GM12878 (cell line): ENCODE measurements at regions of chr13 and their contacts with region 1.

Region 1: DNA sequence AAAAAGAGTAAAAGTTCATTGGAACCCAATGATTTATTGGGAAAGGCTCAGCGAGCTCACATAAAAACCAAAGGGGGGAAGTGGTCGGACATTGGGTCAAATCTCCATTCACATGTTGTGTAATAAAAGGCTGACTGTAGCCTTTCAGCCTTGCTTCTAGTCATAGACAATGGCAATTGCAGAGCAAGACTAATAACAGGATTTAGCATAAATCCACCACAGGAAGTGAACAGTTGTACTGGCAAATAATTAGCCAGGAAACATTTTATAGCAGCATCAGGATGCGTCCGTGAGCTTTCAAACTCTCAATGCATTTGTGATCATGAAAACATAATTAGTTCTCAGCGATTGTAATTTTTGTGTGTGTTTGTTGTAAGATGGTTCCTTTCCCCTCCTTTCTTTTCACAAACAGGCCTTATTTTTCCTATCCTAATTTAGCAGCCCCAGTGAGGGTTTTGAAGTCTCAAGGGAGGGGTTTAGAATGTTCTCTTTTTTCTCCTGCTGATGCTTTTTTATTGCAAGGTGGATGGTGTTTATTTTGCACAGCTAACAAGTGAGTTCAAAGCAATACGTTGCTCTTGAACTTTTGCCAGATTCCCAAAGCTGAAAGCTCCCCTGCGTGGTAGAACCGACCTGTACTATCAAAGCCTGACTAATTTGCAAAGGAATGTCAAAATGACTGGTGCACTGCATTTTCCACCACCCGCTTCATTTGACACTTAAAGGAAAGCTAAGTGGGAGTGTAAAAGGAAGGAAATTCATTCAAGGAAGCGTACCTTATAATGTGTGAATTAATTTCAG is 105.6 kb downstream of the SPRY2 start:
- DNase-seq: no peak
- ATAC-seq: peak; percentile 89
- H3K4me3 ChIP-seq: no peak overlapping the region
- H3K27ac ChIP-seq: no peak overlapping the region
- H3K4me1 ChIP-seq: no peaks in the 10 kb centered on the region
- H3K27me3 ChIP-seq: no peaks in the 10 kb centered on the region
- CTCF ChIP-seq: no peak
- EP300 ChIP-seq: peak in 1 of 2 experiments; percentile 64; a peak in 1 of 4 replicates
- POLR2A ChIP-seq: no peak
- RAD21 ChIP-seq: no peak

Region 2: DNA sequence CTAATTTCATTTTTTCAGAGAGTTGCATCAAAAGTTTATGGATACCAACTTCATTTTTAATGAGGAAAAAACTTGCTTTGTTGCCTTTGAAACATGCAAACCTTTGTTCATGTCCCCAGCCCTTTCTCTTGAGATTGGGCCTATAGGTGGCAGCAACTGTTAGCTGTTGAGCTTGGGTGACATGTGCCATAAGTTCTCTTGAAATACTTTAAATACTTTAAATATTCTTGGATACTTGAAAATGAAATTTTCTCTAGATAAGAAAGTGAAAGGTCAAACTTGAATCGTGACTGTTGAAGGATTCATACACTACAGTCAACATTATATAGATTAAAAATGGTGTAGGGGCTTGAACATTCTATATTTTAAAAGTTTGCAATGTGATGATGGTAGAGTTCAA is 459.5 kb before region 1 on chr13:
- CTCF ChIA-PET with region 1: interaction called, 3 read pairs
- POLR2A ChIA-PET with region 1: no interaction called
- RAD21 ChIA-PET with region 1: no interaction called
- SMC1A ChIA-PET with region 1: interaction called, 4 read pairs
- in situ Hi-C with region 1: no loop called
- intact Hi-C with region 1: loop called (anchors 5 kb)
- DNase-seq: no peak
- ATAC-seq: peak; percentile 86
- H3K4me3 ChIP-seq: no peak overlapping the region
- H3K27ac ChIP-seq: no peak overlapping the region
- H3K4me1 ChIP-seq: no peaks in the 10 kb centered on the region
- H3K27me3 ChIP-seq: no peaks in the 10 kb centered on the region
- CTCF ChIP-seq: peak; percentile 60 to 78 (median 65)
- EP300 ChIP-seq: no peak
- POLR2A ChIP-seq: no peak
- RAD21 ChIP-seq: peak; percentile 94

Region 3: GRCh38 chr13:80048802-80049201 is 186.6 kb before region 1 on chr13:
- CTCF ChIA-PET with region 1: interaction called, 3 read pairs
- POLR2A ChIA-PET with region 1: interaction called, 3 read pairs
- RAD21 ChIA-PET with region 1: interaction called, 12 read pairs
- SMC1A ChIA-PET with region 1: interaction called, 22 read pairs
- in situ Hi-C with region 1: no loop called
- intact Hi-C with region 1: no loop called
- DNase-seq: peak; percentile 89
- ATAC-seq: peak; percentile 98
- H3K4me3 ChIP-seq: no peak overlapping the region
- H3K27ac ChIP-seq: peak overlapping the region; percentile 18; the same call in 1 of the 2 replicates
- H3K4me1 ChIP-seq: peaks cover 21% of the 10 kb centered on the region
- H3K27me3 ChIP-seq: no peaks in the 10 kb centered on the region
- CTCF ChIP-seq: no peak
- EP300 ChIP-seq: peak; percentile 94 to 98
- POLR2A ChIP-seq: no peak
- RAD21 ChIP-seq: no peak

Region 4: GRCh38 chr13:80251403-80251802 is 16.0 kb after region 1 on chr13:
- CTCF ChIA-PET with region 1: interaction called, 7 read pairs
- POLR2A ChIA-PET with region 1: interaction called, 7 read pairs
- RAD21 ChIA-PET with region 1: interaction called, 13 read pairs
- SMC1A ChIA-PET with region 1: interaction called, 66 read pairs
- in situ Hi-C with region 1: no loop called
- intact Hi-C with region 1: no loop called
- DNase-seq: no peak
- ATAC-seq: peak; percentile 44
- H3K4me3 ChIP-seq: no peak overlapping the region
- H3K27ac ChIP-seq: no peak overlapping the region
- H3K4me1 ChIP-seq: no peaks in the 10 kb centered on the region
- H3K27me3 ChIP-seq: no peaks in the 10 kb centered on the region
- CTCF ChIP-seq: no peak; a peak in 1 of 6 replicates
- EP300 ChIP-seq: no peak
- POLR2A ChIP-seq: no peak
- RAD21 ChIP-seq: peak; percentile 6; the same call in 1 of the 2 replicates

Region 5: GRCh38 chr13:80259159-80259558 is 23.8 kb after region 1 on chr13:
- CTCF ChIA-PET with region 1: interaction called, 7 read pairs
- POLR2A ChIA-PET with region 1: interaction called, 5 read pairs
- RAD21 ChIA-PET with region 1: interaction called, 3 read pairs
- SMC1A ChIA-PET with region 1: interaction called, 66 read pairs
- in situ Hi-C with region 1: no loop called
- intact Hi-C with region 1: no loop called
- DNase-seq: no peak
- ATAC-seq: peak; percentile 55
- H3K4me3 ChIP-seq: no peak overlapping the region
- H3K27ac ChIP-seq: no peak overlapping the region
- H3K4me1 ChIP-seq: peaks cover 9% of the 10 kb centered on the region; the same call in 1 of the 2 replicates
- H3K27me3 ChIP-seq: no peaks in the 10 kb centered on the region
- CTCF ChIP-seq: no peak
- EP300 ChIP-seq: no peak
- POLR2A ChIP-seq: no peak
- RAD21 ChIP-seq: no peak

Region 6: DNA sequence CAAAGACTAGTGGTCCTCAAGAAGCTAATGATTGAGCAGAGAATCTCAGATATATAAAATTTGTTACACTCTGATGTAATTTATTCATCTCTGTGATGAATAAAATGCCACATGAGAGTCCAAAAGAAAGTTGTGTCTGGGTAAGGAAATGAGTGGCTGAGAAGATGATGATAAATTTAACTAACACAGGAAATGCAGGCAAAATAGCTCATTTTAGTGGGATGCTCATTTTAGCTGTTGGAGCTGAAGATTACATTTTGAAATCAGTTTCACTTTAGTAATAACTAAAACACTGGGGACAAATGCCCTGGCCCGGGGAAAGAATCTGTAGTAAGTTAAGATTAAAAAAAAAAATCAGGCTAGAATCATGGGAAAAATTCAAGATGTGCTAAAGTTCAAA is 70.4 kb after region 1 on chr13:
- CTCF ChIA-PET with region 1: interaction called, 3 read pairs
- POLR2A ChIA-PET with region 1: no interaction called
- RAD21 ChIA-PET with region 1: interaction called, 3 read pairs
- SMC1A ChIA-PET with region 1: interaction called, 11 read pairs
- in situ Hi-C with region 1: no loop called
- intact Hi-C with region 1: no loop called
- DNase-seq: no peak
- ATAC-seq: peak; percentile 51
- H3K4me3 ChIP-seq: no peak overlapping the region
- H3K27ac ChIP-seq: no peak overlapping the region
- H3K4me1 ChIP-seq: no peaks in the 10 kb centered on the region
- H3K27me3 ChIP-seq: no peaks in the 10 kb centered on the region
- CTCF ChIP-seq: no peak
- EP300 ChIP-seq: no peak
- POLR2A ChIP-seq: no peak
- RAD21 ChIP-seq: no peak

Region 7: DNA sequence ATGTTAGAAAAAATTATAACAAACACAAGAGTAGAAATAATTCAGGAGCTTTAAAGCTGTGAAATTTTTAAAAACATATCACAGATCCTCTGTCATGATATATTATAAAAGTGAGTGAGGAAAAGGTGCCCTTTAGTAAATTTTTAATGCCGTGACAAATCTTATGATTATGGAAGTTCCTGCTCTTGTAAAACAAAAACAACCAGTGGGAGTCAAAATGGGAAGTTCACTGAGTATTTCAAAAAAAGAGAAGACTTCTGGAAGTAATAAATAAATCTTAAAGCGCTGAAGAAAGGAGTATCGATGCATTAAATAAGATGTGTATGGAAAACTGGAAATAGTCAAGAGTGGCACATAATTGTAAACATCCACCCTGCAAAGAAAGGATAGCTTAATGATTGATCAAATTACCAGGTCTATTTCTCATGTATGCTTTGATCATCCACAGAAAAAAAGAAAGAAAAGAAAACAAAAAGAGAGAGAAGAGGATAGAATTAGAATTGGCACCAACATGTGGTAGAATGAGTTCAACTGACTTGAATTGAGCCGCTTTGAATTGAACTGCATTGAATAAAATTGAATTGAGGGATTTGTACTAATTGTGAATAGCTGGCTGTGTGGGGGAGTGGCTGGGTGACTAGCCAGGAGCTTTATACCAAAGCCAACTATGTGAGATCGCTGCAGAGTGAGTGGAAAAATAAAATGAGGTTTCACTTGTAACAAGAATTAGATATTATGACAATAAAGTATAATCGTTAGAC is 753.2 kb after region 1 on chr13:
- CTCF ChIA-PET with region 1: no interaction called
- POLR2A ChIA-PET with region 1: no interaction called
- RAD21 ChIA-PET with region 1: no interaction called
- SMC1A ChIA-PET with region 1: no interaction called
- in situ Hi-C with region 1: no loop called
- intact Hi-C with region 1: no loop called
- DNase-seq: no peak
- ATAC-seq: no peak
- H3K4me3 ChIP-seq: no peak overlapping the region
- H3K27ac ChIP-seq: no peak overlapping the region
- H3K4me1 ChIP-seq: no peaks in the 10 kb centered on the region
- H3K27me3 ChIP-seq: no peaks in the 10 kb centered on the region
- CTCF ChIP-seq: no peak
- EP300 ChIP-seq: no peak
- POLR2A ChIP-seq: no peak
- RAD21 ChIP-seq: no peak